BJ (cell line): ENCODE measurements at regions of chr1 and their contacts with region 1.

Region 1: GRCh38 chr1:229526695-229527094 is 18.6 kb upstream of the NUP133 start:
- DNase-seq: no peak
- H3K4me3 ChIP-seq: no peak overlapping the region
- H3K27me3 ChIP-seq: no peaks in the 10 kb centered on the region
- CTCF ChIP-seq: no peak

Region 2: DNA sequence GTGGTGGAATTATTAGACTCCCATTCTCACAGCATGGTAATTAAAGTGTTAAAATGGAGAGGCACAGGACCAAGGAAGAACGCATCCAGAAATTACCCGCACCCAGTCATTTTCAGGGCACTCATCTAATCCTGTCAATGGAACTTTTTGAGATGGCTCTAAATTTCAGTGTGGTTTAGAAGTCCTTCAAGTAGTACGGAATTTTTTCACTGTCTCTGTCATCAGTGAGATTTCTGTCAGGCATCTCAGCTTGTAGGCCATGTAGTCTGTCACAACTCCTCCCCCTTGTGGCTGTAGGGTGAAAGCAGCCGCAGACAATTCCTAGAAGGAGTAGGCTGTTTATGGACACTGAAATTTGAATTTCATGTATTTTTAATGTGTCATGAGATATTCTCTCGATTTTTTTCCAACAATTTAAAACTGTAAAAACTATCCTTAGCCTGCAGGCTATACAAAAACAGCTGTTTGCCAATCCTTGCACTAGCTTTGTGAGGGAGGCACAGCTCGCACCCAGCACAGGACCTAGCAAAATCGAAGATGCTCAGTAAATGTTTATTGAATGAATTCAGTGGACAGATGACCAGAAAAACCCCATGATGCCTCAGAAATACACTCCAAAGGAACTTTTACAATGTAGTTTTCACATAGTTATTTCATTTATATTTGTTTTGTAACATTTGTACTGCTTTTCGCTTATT is 12.0 kb before region 1 on chr1:
- CTCF ChIA-PET with region 1: interaction called, 11 read pairs
- POLR2A ChIA-PET with region 1: no interaction called
- DNase-seq: peak; percentile 19
- H3K4me3 ChIP-seq: no peak overlapping the region
- H3K27me3 ChIP-seq: no peaks in the 10 kb centered on the region
- CTCF ChIP-seq: peak; percentile 93